ENCODE measurements at regions of chr10 and their contacts with region 1.

Region 1: DNA sequence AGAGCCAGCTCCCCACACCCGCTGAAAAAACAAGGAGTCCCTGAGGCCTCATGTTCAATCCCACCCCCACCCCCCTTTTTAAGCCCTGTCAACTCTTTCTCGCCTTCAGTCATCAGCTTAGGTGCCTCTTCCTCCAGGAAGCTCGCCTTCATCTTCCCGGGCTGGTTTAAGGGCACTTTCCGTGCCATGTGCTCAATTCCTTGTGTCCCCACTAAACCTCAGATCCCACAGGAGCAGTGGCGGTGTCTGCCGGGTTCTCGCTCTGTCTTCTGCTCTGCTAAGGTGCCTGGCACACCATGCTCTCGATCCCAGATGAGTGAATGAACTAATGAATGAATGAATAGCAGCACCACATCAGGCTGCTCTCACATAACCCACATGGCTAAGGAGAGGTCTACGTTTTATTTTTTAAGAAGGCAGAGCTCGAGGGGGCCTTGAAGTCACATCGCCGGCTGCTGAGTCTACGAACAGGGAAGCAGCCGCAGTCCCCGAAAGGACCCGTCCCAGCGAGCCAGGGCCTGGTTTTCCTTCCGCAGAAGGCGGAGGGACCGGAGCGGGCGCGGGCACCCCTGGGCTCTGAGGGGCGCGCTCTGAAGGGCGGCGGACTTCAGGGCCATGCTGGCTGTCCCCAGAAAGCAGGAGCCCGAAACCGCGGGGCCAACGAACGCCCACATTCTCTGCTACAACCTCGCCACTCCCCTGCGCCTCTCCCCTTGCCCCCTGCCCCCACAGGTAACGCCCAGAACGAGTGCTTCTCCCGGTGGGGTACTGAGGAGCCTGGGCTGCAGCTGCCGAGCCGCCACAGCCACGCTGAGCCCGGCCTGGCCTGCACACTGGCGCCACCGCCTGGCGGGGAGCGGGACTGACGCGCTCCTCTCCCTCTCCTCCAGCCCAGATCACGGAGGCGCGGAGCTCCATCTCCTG is 73.4 kb upstream of the KCNMA1 start:
- DNase-seq: peak in 1 of 2 donors; percentile 52
- H3K4me3 ChIP-seq: peak overlapping the region; percentile 41 to 54
- H3K27ac ChIP-seq: no peak overlapping the region
- H3K4me1 ChIP-seq: peaks cover 6% of the 10 kb centered on the region
- H3K27me3 ChIP-seq: no peaks in the 10 kb centered on the region
- CTCF ChIP-seq: peak; percentile 65 to 82 (median 76)
- POLR2A ChIP-seq: no peak

Region 2: GRCh38 chr10:77165445-77166208 is 545.4 kb before region 1 on chr10:
- intact Hi-C with region 1: loop called (anchors 10 kb)
- DNase-seq: no peak
- H3K4me3 ChIP-seq: no peak overlapping the region
- H3K27ac ChIP-seq: no peak overlapping the region
- H3K4me1 ChIP-seq: peaks cover 44% of the 10 kb centered on the region
- H3K27me3 ChIP-seq: no peaks in the 10 kb centered on the region
- CTCF ChIP-seq: peak; percentile 48 to 76 (median 69)
- POLR2A ChIP-seq: no peak